ENCODE measurements at regions of chr16 and their contacts with region 1.

Region 1: DNA sequence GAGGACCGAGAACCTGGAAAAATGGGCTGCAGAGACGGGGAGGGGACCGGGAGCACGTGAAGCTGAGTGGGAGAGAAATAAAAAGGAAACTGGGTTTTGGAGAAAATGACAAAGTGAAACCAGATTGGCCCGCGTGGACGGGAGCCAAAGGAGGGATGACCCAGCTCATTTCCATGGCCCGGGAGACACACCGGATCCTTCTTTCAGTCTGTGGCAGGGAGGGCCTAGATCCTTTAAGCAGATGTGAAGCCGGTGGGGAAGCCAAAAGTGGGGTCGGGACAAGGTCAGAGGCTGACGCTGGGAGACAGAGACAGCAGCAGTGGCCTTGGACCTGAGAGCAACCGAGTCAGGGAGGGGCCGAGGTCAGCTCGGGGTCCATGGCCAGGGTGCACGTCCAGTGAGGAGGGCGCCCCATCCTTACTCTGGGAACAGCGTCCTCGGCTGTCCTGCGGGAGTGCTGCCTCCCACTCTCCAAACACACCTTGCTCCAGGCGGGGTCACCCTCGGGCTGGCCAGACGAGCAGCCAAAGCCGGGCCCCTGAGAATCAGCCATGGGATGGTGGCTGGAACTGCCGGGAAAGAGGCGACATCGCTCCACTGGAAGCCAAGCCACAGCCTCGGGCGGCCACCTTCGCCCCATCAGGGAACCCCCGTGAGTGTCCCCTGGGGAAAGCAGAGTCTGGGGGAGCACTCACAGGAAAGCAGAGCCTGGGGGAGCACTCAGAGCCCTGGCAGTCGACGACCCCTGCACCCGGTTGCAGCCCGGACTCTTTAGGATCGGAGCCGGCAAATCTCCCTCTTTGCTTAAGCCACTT is 17.3 kb downstream of the CA5A start:
- DNase-seq: no peak
- H3K4me3 ChIP-seq: no peak overlapping the region
- H3K27ac ChIP-seq: no peak overlapping the region
- H3K4me1 ChIP-seq: no peaks in the 10 kb centered on the region
- CTCF ChIP-seq: no peak

Region 2: GRCh38 chr16:87642491-87642890 is 276.6 kb before region 1 on chr16:
- CTCF ChIA-PET with region 1: interaction called, 12 read pairs
- POLR2A ChIA-PET with region 1: no interaction called
- intact Hi-C with region 1: no loop called
- DNase-seq: no peak
- H3K4me3 ChIP-seq: no peak overlapping the region
- H3K27ac ChIP-seq: no peak overlapping the region
- H3K4me1 ChIP-seq: no peaks in the 10 kb centered on the region
- CTCF ChIP-seq: no peak

Region 3: GRCh38 chr16:87806603-87807546 is 112.2 kb before region 1 on chr16:
- CTCF ChIA-PET with region 1: no interaction called
- POLR2A ChIA-PET with region 1: no interaction called
- intact Hi-C with region 1: no loop called
- DNase-seq: peak; percentile 95
- H3K4me3 ChIP-seq: peak overlapping the region; percentile 65
- H3K27ac ChIP-seq: peak overlapping the region; percentile 97
- H3K4me1 ChIP-seq: peaks cover 91% of the 10 kb centered on the region
- CTCF ChIP-seq: 0 out of 2 replicates have a peak, but pooled peaks have one; percentile 24

Region 4: GRCh38 chr16:87891764-87892163 is 27.3 kb before region 1 on chr16:
- CTCF ChIA-PET with region 1: no interaction called
- POLR2A ChIA-PET with region 1: no interaction called
- intact Hi-C with region 1: no loop called
- DNase-seq: no peak
- H3K4me3 ChIP-seq: no peak overlapping the region
- H3K27ac ChIP-seq: no peak overlapping the region
- H3K4me1 ChIP-seq: peaks cover 22% of the 10 kb centered on the region
- CTCF ChIP-seq: no peak